Colonic mucosa (tissue), 4 donors: ENCODE measurements at regions of chr1 and their contacts with region 1.

Region 1: GRCh38 chr1:6554031-6554906 is at the start of gene NOL9:
- DNase-seq: peak; percentile 94
- H3K4me3 ChIP-seq: peak within 1 kb of the TSS; percentile 100
- H3K27ac ChIP-seq: peak within 1 kb of the TSS; percentile 36
- H3K4me1 ChIP-seq: peaks cover 3% of the 10 kb centered on the region
- H3K27me3 ChIP-seq: no peaks in the 10 kb centered on the region
- CTCF ChIP-seq: peak; percentile 93
- total RNA-seq, gene NOL9: 14.5 to 27.3 TPM

Region 2: GRCh38 chr1:6205849-6206519 is 348.3 kb before region 1 on chr1 and contains the start of gene RNF207:
- intact Hi-C with region 1: no loop called
- DNase-seq: peak; percentile 70
- H3K4me3 ChIP-seq: peak within 1 kb of the TSS; percentile 65
- H3K27ac ChIP-seq: peak within 1 kb of the TSS; percentile 86
- H3K4me1 ChIP-seq: peaks cover 12% of the 10 kb centered on the region
- H3K27me3 ChIP-seq: no peaks in the 10 kb centered on the region
- CTCF ChIP-seq: no peak
- total RNA-seq, gene RNF207: 18.4 to 19.4 TPM

Region 3: DNA sequence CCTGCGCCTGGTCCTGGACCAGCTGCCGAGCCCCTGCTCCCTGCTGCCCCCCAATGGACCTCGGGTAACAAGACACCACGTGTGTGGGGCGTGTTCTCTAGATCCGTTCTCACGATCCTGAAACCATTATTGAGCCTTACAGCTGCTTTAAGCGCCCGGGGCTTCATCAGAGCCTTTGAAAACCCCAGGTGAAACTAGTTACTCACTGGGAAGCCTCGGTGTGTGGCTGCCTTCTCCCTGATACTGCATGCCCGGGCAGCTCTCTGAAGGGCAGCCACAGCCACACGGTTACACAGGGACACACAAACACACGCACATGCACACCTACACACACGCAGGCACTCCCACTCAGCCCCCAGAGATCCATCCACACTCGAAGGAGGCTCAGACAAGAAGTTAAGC is 139.8 kb before region 1 on chr1:
- intact Hi-C with region 1: no loop called
- DNase-seq: peak; percentile 62
- H3K4me3 ChIP-seq: no peak overlapping the region
- H3K27ac ChIP-seq: peak overlapping the region; percentile 6
- H3K4me1 ChIP-seq: peaks cover 14% of the 10 kb centered on the region
- H3K27me3 ChIP-seq: peaks cover 9% of the 10 kb centered on the region
- CTCF ChIP-seq: no peak

Region 4: GRCh38 chr1:6634371-6635052 is 80.2 kb after region 1 on chr1:
- intact Hi-C with region 1: loop called (anchors 10 kb)
- DNase-seq: peak; percentile 62
- H3K4me3 ChIP-seq: no peak overlapping the region
- H3K27ac ChIP-seq: no peak overlapping the region
- H3K4me1 ChIP-seq: no peaks in the 10 kb centered on the region
- H3K27me3 ChIP-seq: no peaks in the 10 kb centered on the region
- CTCF ChIP-seq: peak; percentile 42

Region 5: DNA sequence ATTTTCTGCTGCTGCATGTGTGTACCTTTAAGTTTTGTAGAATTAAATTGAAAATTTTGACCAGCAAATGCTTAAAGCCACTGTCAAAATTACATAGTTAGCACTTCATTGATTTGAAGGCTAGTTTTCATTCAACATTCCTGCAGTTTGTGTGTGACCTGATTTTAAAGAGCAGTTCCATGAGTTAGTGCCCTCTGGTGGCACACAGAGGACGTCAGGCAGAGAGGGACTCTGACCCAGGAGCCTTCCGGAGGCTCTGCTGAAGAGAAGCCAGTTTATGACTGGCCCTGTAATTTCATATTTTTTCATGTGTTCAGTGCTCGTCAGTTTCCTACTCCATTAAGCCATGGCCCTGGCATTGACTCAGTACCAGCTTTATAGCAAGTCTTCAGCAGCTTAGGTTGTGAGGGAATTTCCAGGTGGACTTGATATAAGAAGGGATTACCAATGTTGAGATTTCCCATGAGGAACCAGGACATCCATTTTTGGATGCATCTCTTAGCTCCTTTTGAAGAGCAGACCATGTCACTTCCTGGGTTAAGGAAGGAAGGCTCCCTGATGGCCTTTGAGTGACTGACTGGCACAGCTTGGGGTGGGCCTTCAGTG is 335.7 kb after region 1 on chr1:
- intact Hi-C with region 1: no loop called
- DNase-seq: peak; percentile 69
- H3K4me3 ChIP-seq: no peak overlapping the region
- H3K27ac ChIP-seq: no peak overlapping the region
- H3K4me1 ChIP-seq: no peaks in the 10 kb centered on the region
- H3K27me3 ChIP-seq: no peaks in the 10 kb centered on the region
- CTCF ChIP-seq: peak; percentile 74